ENCODE measurements at regions of chr3 and their contacts with region 1.

Region 1: DNA sequence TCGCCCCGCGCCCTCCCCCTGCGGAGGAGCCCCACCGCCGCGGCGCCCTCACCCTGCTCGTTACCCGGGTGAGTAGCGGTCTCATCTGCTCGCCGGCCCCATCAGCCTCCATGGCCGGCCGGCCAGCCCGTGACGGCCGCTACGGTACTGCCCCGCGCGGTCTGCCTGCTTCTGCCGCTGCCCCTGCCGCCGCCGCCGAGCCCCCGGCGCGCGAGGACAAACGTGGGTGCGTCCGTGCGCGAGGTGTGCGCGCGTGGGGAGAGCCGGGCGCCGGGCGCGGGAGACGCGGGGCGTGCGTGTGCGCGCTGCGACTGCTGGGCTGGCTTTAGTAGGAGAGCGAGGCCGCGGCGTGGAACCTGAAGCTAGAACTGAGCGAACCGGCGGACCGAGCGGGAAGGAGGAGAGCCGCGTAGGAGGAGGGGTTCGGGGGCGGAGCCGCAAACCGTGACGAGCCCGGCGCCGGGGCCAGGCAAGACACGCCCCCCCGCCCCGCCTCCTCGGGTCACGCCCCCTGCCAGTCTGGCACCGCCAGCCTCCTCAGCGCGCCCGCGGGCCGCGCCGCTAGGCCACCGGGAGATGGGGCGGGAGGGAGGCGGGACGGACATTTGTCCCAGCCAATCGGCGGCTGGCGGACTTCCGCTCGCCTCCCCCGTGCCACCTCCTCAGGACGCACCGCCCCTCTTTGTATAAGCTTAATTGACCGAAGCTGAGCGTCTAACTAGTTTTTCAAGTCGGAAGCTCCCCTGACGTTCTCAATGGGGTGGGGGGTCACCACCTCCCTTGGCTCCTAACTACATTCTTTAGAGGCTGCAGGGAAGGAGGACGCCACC is at the start of gene SLC4A7:
- DNase-seq: peak; percentile 99
- total RNA-seq, gene SLC4A7: 13.5 TPM

Region 2: GRCh38 chr3:27521179-27521871 is 37.1 kb after region 1 on chr3:
- intact Hi-C with region 1: loop called (anchors 5 kb)
- DNase-seq: no peak

Region 3: DNA sequence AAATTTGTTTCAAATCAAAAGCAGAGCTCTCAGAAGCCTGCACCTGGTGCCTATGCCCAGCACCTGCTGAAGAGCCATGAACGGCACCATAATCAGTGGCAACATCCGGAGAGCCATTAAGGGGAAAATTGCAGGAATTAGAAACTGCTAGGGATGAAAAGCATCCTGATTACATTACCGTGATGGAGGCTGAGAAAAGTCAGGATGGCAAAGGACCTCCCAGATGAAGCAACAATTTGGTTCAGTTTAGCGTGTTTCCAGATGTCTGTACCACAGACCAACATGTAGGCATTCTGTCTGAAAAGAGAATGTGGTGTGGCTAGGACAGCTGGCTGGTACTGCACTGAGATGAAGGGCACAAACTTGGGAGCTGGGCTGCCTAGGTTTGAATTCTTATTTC is 131.8 kb after region 1 on chr3:
- intact Hi-C with region 1: no loop called
- DNase-seq: no peak

Region 4: GRCh38 chr3:27632431-27633223 is 148.4 kb after region 1 on chr3:
- intact Hi-C with region 1: loop called (anchors 5 kb)
- DNase-seq: peak; percentile 82

Region 5: DNA sequence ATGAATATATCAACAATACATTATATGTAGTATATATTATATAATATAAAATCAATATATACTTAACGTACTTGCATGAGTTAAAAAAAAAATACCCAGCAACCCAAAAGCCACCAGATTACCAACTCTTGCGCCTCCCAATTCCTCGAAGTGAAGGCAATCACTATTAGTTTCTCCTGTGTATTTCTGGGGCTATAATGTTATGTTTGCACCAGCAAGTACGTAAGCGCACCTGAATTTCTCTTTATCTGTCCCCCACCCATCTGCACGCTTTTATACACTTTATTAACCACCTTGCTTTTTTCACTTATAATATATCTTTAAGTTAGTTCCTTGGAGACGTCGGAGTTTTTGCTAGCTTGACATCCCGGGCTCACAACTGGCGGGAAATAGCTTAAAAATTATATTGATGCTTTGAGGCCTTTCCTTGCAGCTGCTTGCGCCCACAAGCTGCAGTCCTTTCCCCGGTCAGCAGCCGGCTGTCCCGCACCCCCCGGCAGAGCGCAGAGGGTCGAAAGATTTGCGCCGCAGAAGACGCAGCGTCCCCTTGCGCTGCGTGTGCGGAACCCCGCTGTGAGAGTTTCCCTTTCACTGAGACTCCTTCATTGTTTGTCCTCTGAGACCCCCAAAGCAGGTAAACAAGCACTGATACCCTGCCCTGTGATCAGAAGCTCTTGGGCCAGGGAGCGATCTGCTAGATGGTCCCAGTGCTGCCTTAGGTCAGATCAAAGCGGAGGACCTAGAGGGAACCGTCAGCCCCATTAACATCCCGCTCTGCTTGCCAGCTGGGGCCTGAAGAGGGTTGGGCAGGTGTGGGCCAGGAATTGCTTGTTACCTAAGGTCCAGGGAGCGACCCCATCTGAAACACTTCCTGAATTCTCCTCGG is 246.8 kb after region 1 on chr3:
- intact Hi-C with region 1: no loop called
- DNase-seq: no peak